ENCODE measurements at regions of chr20 and their contacts with region 1.

Region 1: DNA sequence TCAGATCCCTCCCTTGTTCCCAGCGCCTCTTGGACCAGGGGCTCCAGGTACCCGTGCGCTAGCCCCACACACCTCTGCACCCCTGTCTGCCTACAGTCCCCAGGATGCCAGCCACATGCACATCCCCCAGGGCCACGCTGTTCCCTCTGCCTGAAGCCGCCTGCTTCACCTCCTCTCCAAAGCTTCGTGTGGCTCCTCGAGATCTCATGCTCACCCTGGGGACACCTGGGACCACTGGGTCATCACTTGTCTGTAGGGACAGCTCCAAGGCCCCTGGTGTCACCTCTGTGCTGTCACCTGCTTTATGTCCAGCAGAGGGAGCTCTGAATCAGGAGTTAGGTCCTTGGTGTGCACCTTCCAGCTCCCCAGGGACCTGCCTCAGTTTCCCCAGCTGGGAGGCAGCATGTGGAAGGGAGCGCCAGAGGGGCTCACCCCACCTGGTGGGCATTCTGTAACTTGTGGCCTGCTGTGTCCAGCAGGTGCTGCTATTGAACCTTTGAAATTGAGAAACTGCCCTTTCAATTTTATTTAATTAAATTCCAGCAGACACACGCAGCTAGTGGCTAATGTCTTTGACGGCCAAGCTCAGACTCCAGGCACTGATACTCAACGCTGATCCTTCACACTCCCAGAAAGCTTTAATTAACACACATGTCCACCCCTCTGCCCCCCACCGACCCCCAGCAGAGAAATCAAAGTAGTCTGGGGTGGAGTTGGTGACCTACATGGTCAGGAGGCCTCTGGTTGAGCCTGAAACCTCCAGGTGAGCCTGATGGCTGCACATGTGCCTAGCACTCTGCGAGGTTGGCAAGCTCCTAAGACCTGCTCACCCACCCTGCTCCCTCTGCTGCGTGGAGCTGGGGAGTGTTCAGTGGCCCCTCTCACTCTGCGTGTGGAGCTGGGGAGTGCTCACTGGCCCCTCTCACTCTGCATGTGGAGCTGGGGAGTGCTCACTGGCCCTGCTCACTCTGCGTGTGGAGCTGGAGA is 7.6 kb upstream of the YTHDF1 start:
- DNase-seq: no peak
- H3K4me3 ChIP-seq: no peak overlapping the region
- CTCF ChIP-seq: peak; percentile 70

Region 2: DNA sequence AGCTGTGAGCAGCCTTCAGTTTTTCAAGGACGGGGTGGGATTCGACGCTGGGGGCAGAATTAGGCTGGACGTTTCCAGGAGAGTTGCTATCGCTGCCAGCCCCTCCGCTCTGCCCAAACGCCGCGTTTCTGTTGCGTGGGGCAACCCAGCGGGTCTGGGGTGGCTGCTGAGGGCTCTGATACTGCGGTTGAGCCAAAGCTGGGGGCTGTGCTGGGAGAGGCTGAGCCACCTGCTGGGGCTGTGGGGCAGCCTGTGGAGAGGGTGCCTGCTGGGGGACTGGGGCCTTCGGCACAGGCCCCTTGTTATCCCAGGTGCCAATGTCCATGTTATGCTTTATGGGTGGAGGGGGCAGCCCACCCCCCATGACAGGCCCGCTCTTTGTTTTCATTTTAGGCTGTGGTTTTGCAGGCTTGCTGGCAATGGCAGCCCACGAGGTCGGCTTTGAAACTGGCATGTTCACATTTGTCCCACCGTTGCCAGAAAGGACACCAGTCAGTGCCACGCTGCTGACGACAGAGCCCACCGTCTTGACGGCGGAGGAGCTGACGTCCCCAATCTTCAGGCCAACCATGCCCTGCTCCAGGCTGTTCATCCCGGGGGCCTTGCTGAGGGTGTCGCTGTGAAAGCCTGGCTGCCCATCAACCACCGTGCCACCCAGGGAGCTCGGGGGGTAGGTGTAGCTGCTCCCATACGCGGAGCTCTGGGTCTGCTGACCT is 20.5 kb before region 1 on chr20:
- CTCF ChIA-PET with region 1: interaction called, 22 read pairs
- POLR2A ChIA-PET with region 1: no interaction called
- DNase-seq: no peak
- H3K4me3 ChIP-seq: no peak overlapping the region
- CTCF ChIP-seq: no peak

Region 3: DNA sequence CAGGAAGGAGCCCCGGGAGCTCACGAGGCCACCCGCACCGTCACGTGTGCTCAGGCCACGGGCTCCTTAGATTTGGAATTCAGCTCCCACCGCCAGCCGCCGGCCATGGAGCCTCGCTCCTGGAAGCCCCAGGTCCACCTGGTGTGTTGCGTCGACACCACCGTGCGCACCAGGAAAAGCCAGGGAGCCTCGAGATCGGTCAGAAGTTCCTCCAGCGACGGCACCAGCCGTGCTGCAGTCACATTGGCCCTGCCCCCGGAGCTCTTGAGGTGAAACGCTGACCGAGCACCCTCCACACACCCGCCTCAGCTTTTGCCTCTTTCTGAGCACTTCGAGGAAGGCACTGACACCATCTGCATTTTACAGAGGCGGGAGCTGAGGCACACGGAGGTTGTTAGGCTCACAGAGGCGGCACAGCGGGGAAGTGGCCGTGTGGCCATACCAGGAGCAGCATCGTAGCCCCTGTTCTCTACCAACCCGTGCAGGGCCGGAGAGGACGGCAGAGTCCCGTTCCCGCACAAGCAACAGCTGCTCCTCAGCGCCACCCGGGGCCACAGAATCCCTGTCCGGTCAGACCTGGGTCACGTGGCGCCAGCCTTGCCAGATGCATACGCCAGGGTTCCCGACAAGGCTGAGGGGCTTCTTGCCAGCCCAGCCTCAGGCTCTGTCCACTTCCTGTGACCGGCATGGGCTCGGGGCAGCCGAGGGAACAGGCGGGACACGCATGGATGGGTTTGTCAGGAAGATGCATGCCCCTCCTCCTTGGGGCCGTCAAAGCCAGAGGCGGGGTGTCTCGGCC is 23.2 kb after region 1 on chr20:
- CTCF ChIA-PET with region 1: interaction called, 121 read pairs
- POLR2A ChIA-PET with region 1: no interaction called
- DNase-seq: no peak
- H3K4me3 ChIP-seq: no peak overlapping the region
- CTCF ChIP-seq: no peak

Region 4: DNA sequence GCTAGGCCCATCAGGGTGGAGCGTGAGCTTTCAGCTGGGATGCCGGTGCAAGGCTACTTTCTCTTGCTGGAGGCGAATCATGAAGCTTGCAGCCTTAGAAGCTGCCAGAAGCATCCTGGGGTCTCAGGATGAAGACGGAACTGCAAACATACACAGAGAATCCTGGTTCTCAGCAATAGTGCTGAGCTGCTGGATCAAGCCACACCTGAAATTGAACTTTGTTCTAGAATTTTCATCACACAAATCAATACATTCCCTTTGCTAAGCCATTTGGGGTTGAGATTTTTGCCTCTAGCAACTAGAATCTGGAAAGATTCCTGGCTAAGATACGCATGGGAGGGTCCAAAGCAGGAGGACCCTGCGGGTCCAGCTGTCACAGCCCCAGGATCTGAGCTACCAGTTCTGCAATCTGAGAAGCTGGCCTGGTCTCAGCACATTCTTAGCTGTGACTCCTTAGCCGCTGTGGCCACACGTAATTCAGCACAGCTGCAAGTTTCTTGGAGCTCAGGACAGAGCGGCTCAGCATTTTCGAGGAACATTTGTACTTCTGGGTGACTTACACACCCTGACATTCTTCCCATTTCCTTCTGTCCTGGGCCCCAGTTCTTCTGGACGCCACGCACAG is 42.5 kb after region 1 on chr20:
- CTCF ChIA-PET with region 1: interaction called, 142 read pairs
- POLR2A ChIA-PET with region 1: interaction called, 3 read pairs
- DNase-seq: peak; percentile 12
- H3K4me3 ChIP-seq: no peak overlapping the region
- CTCF ChIP-seq: no peak

Region 5: GRCh38 chr20:63290677-63291472 is 67.4 kb after region 1 on chr20:
- CTCF ChIA-PET with region 1: interaction called, 92 read pairs
- POLR2A ChIA-PET with region 1: interaction called, 4 read pairs
- DNase-seq: no peak
- H3K4me3 ChIP-seq: no peak overlapping the region
- CTCF ChIP-seq: peak; percentile 92

Region 6: DNA sequence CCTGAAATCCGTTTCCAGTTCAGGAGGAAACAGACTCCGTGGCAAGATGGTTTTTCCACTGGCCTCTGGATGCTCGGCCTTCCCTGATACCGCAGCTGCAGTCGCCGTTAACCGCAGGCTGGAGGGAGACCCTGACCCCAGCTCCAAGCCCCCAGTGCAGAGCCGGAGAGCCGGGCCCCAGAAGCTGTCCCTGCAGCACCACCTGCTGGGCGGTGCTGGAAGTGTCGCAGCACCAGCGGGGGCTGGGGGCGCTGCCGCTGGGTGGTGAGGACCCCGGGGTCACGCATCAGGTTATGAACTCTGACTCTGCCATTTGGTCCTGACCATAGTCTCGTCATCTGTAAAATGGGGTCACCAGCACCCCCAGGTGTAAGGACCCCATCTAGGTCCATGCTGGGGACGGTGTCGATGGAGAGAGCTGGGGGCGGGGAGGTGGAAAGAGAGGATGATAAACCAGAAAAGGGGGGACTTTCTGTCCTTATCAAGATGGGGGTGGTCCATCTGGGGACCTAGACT is 158.4 kb after region 1 on chr20:
- CTCF ChIA-PET with region 1: interaction called, 41 read pairs
- POLR2A ChIA-PET with region 1: no interaction called
- DNase-seq: no peak
- H3K4me3 ChIP-seq: no peak overlapping the region
- CTCF ChIP-seq: peak; percentile 94

Measured in AG04449 (cell line).